HepG2 (cell line): ENCODE measurements at regions of chr1 and their contacts with region 1.

Region 1: DNA sequence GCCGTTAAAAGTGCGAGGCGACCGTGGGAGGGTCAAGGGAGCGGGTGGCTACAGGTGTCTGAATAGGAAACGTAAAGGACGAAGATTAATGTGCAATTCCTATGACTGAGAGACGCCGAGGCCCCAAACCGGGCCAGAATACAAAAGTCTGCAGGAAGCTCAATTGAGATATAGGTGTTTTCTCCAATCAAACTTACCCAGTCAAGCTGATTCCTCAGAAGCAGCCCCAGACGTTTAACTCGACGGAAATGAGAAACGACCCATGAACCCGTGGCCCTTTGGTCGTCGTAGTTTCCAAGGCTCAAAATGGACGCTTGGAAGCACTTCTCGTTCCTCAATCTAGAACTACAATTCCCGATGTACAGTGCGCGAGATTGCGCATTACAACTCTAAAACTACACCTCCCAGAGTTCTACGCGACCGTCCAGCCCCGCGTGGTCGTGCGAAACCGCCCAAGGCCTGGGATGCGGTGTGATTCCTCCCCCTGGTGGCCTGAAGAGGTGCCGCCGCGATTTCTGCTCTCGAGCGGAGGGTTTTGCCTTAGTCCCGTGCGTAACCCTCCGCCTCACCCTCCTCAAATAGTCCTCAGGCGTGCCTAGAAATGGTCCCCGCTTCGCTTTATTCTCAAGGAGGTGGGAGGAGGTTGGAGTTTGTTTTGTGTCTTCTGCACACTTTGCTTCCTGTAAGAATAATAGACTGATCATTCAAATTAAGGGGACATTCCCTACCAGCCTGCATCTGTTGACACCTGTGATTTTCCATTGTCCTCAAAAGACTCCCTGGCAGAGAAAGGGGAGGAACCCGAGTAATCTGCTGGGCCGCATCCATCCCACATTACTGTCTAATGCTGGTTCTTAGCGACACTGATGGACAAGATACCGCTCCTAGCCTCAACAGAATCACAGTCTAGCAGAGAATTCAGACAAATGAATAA is at the start of gene PAFAH2:
- DNase-seq: peak; percentile 98
- ATAC-seq: peak; percentile 96
- H3K4me3 ChIP-seq: peak within 1 kb of the TSS; percentile 81 to 85 (median 82)
- H3K27ac ChIP-seq: peak within 1 kb of the TSS; percentile 78
- H3K4me1 ChIP-seq: peaks cover 36% of the 10 kb centered on the region
- H3K27me3 ChIP-seq: no peaks in the 10 kb centered on the region; a peak in 1 of 5 replicates
- CTCF ChIP-seq: peak; percentile 100
- EP300 ChIP-seq: peak in 1 of 2 experiments; percentile 57; a peak in 2 of 4 replicates
- POLR2A ChIP-seq: no peak; a peak in 1 of 4 replicates
- RAD21 ChIP-seq: peak; percentile 98
- total RNA-seq, gene PAFAH2: 6.9 and 9.2 TPM in 2 replicates

Region 2: GRCh38 chr1:25819576-25820246 is 178.4 kb before region 1 on chr1 and contains the start of gene MTFR1L:
- CTCF ChIA-PET with region 1: no interaction called
- POLR2A ChIA-PET with region 1: interaction called, 20 read pairs
- in situ Hi-C with region 1: loop called (anchors 10 kb)
- intact Hi-C with region 1: loop called (anchors 5 kb)
- DNase-seq: peak; percentile 83
- ATAC-seq: peak; percentile 89
- H3K4me3 ChIP-seq: peak within 1 kb of the TSS; percentile 90 to 94 (median 94)
- H3K27ac ChIP-seq: peak within 1 kb of the TSS; percentile 98
- H3K4me1 ChIP-seq: peaks cover 33% of the 10 kb centered on the region
- H3K27me3 ChIP-seq: no peaks in the 10 kb centered on the region; a peak in 1 of 5 replicates
- CTCF ChIP-seq: no peak
- EP300 ChIP-seq: no peak
- POLR2A ChIP-seq: peak; percentile 79 to 92
- RAD21 ChIP-seq: peak; percentile 27; the same call in 1 of the 2 replicates
- total RNA-seq, gene MTFR1L: 38.0 and 47.5 TPM in 2 replicates

Region 3: DNA sequence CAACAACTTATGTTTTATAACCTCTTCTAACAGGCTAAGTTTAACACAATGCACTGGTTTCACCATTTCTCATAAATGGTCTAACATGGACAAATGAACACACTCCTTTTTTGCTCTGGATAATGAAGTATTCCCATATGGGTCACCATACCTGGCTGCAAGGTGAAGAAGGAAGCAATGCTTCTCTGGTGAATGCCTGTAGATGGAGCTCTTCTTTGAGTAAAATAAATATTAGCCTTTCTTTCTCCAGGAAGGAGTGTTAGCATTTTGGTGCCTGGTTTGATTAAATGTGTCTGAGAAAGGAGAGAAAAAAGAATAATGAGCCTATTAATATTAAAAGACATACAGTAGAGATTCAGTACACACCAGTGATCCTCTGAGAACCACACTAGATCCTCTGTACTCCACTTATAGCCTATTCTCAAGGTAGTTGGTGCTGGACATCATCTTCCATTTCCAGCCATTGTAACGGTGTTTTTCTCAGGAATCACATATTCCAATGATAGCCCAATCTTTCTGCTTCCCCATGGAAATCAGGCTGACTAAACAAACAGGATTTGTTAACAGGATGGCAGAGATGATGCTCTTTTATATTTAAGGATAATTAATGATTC is 160.7 kb before region 1 on chr1:
- CTCF ChIA-PET with region 1: interaction called, 10 read pairs
- POLR2A ChIA-PET with region 1: interaction called, 3 read pairs
- in situ Hi-C with region 1: no loop called
- intact Hi-C with region 1: loop called (anchors 1 kb)
- DNase-seq: peak; percentile 41
- ATAC-seq: peak; percentile 59; the same call in 1 of the 3 replicates
- H3K4me3 ChIP-seq: no peak overlapping the region
- H3K27ac ChIP-seq: no peak overlapping the region
- H3K4me1 ChIP-seq: peaks cover 7% of the 10 kb centered on the region; the same call in 1 of the 2 replicates
- H3K27me3 ChIP-seq: no peaks in the 10 kb centered on the region
- CTCF ChIP-seq: peak; percentile 64
- EP300 ChIP-seq: no peak
- POLR2A ChIP-seq: no peak
- RAD21 ChIP-seq: no peak

Region 4: DNA sequence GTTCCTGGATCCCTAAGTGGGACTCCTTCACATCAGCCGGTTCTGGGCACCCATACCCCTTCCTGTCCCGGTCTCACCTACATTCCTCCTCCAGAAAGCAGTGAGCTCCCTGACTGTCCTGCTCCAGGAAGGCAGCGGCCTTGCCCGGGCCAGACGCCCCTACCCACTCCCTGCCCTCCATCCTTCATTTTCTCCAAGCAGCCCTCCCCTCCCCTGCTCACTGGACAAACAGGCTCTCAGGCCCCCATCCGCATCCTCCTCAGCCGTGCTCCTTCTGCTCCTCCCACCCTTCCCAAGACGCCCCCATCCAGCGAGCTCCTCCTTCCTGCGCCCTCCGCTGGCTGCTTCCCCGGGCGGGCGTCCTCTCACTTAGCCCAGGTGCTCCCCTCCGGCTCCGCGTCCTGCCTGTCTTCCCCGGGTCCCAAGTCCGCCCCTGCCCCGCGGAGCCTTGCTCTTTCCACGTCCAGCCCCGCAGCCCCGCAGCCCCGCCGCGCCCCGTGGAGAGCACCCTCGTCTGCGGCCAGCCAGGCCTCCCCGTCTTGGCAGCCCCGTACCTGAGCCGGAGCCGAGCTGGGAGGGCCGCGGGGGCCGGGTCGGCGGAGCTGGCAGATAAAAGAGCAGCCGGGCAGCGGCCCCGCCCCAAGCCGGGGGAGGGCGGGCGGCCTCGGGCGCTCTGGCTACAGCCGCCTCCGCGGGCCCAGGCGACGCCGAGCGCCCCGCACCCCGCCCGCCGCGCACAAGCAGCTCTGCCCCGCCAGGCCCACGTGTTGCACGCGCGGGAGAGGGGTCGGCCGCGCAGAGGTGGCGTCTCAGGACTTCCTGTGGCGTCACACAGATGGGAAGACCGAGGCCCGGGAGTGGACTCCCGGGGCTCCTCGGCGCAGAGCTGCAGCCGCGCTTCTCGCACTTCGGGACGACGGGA is 122.9 kb before region 1 on chr1 and contains the start of gene PAQR7:
- CTCF ChIA-PET with region 1: no interaction called
- POLR2A ChIA-PET with region 1: interaction called, 15 read pairs
- in situ Hi-C with region 1: no loop called
- intact Hi-C with region 1: no loop called
- DNase-seq: peak; percentile 67
- ATAC-seq: peak; percentile 80
- H3K4me3 ChIP-seq: peak within 1 kb of the TSS; percentile 69 to 95 (median 70)
- H3K27ac ChIP-seq: peak within 1 kb of the TSS; percentile 79
- H3K4me1 ChIP-seq: peaks cover 71% of the 10 kb centered on the region
- H3K27me3 ChIP-seq: no peaks in the 10 kb centered on the region; a peak in 1 of 5 replicates
- CTCF ChIP-seq: peak; percentile 57
- EP300 ChIP-seq: 0 out of 4 replicates have a peak, but pooled peaks of 1 of the 2 experiments have one; percentile 10
- POLR2A ChIP-seq: peak in 1 of 2 experiments; percentile 60; a peak in 3 of 4 replicates
- RAD21 ChIP-seq: no peak; the same call in none of the 2 replicates
- total RNA-seq, gene PAQR7: 6.0 and 13.2 TPM in 2 replicates

Region 5: GRCh38 chr1:25895365-25895993 is 102.6 kb before region 1 on chr1:
- CTCF ChIA-PET with region 1: interaction called, 40 read pairs
- POLR2A ChIA-PET with region 1: interaction called, 25 read pairs
- in situ Hi-C with region 1: loop called (anchors 5 kb)
- intact Hi-C with region 1: loop called (anchors 1 kb)
- DNase-seq: peak; percentile 75
- ATAC-seq: peak; percentile 92
- H3K4me3 ChIP-seq: no peak overlapping the region
- H3K27ac ChIP-seq: no peak overlapping the region
- H3K4me1 ChIP-seq: peaks cover 28% of the 10 kb centered on the region
- H3K27me3 ChIP-seq: no peaks in the 10 kb centered on the region
- CTCF ChIP-seq: peak; percentile 96
- EP300 ChIP-seq: no peak
- POLR2A ChIP-seq: no peak
- RAD21 ChIP-seq: peak; percentile 98

Region 6: DNA sequence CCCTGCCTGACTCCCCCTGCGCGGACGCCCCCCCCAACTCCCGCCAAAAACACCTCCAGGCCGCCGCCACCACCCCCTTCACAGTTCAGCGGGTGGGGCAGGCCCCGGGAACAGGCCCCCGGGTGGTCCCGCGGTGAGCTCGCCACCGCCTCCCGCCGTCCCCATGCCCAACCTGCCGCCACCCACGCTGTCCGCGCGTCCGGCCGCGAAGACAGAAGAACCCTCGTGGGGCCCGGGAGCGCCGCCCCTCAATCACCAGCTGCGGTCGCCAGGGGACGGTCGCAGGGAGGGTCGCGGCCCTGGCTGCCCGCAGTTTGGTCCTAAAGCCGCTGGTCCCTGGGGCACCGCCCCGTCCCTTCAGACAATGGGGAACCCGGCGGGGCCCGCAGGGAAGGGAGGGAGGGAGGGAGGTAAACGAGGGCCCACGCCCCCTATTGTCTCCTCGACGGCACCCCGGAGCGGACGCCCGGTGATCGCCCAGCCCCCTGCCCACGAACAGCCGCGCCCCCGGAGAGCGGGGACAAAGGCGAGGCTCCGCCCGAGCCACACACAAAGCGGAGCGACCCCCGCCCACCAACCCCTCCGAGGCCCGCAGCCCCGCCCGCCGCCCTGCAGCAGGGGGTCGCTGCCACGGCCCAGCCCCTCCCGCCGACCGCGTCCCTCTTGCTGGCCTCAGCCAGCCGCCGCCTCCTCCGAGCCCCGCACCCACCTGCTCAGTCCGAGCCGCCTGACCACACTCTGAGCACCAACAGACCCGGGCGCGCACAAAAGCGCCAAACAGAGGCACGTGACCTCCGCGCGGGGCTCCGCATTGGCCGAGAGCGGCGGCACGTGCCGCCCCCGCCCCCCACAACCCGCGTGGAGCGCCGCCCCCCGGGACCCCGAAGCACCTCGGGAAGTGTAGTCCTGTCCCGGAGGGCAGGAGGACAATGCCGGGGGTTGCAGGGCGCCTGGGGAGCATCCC is 92.1 kb before region 1 on chr1 and contains the start of gene STMN1:
- CTCF ChIA-PET with region 1: interaction called, 5 read pairs
- POLR2A ChIA-PET with region 1: interaction called, 9 read pairs
- in situ Hi-C with region 1: no loop called
- intact Hi-C with region 1: loop called (anchors 1 kb)
- DNase-seq: peak; percentile 86
- ATAC-seq: peak; percentile 89
- H3K4me3 ChIP-seq: peak within 1 kb of the TSS; percentile 74 to 92 (median 84)
- H3K27ac ChIP-seq: peak within 1 kb of the TSS; percentile 70
- H3K4me1 ChIP-seq: peaks cover 52% of the 10 kb centered on the region
- H3K27me3 ChIP-seq: peaks cover 0 to 3% of the 10 kb centered on the region in 2 experiments; a peak in 2 of 5 replicates
- CTCF ChIP-seq: no peak
- EP300 ChIP-seq: no peak
- POLR2A ChIP-seq: peak; percentile 89 to 98
- RAD21 ChIP-seq: no peak
- total RNA-seq, gene STMN1: 409 and 618 TPM in 2 replicates

Region 7: DNA sequence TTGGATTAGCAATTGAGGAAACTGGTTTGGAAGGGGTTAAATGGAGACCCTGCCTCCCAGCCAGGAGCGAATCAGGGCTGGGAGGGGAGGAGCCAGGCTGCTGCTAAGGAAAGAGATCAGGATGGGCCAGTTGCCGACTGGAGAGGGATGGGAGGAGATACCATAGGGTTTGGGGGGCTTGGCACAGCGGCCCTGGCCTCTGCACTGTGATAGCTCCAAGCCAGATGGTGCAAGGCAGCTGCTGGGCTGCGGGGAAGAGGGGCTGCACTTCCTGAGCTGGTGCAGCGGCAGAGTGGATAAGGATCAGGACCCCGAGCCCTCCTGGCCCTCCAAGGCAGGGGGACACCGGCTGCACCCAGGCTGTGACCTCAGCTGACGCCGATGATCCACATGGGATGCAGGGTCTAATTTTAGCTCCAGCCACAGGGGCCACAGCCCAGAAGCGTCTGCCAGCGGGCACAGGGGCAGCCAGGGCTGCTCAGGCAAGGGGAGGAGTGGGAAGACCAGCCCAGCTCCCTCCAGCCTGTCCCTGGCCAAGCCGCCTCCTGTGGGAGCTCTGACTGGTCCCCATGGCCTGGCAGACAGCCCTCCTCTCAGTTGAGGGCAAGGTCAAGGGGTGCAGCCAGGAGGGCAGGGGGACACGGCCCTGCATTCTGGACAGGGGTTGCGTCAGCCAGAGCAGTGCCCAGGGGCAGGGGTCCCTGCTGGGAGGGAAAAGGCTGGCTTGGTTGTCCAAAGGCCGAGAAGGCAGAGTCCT is 23.7 kb after region 1 on chr1 and contains the start of gene EXTL1:
- CTCF ChIA-PET with region 1: no interaction called
- POLR2A ChIA-PET with region 1: interaction called, 10 read pairs
- in situ Hi-C with region 1: no loop called
- intact Hi-C with region 1: no loop called
- DNase-seq: no peak
- ATAC-seq: peak; percentile 63
- H3K4me3 ChIP-seq: peak within 1 kb of the TSS; percentile 43 to 78 (median 49)
- H3K27ac ChIP-seq: no peak within 1 kb of the TSS
- H3K4me1 ChIP-seq: peaks cover 89% of the 10 kb centered on the region
- H3K27me3 ChIP-seq: peaks cover 4 to 25% of the 10 kb centered on the region in 2 experiments
- CTCF ChIP-seq: no peak
- EP300 ChIP-seq: no peak
- POLR2A ChIP-seq: peak in 1 of 2 experiments; percentile 75; a peak in 2 of 4 replicates
- RAD21 ChIP-seq: no peak
- total RNA-seq, gene EXTL1: 0.28 and 0.35 TPM in 2 replicates

Region 8: DNA sequence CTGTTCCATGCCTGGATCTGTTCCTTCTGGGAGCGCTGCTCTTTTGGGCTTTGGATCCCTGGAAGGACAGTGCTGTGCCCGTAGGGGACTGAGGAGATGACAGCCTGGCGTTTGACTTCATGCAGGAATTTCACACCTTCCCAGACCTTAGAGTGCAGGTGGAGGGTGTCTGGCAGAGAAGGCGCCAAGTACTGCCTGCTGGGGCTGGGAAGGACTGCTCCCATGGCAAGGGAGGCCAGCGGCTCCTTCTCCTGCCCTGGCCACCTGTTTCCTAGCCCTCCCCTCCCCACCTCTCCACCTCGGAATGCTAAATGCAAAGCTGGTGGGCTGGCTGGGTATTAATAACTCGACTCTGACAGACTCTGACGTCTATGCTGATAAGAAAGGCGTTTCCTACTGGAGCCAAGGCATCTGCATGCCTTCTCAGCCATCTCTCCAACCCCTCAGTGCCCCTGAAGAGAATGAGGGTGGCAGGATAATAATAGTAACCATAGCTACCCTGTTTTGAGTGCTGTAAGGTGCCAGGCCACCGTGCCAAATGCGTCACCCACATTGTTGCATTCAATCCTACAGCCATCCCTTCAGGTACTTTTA is 96.1 kb after region 1 on chr1:
- CTCF ChIA-PET with region 1: no interaction called
- POLR2A ChIA-PET with region 1: no interaction called
- in situ Hi-C with region 1: no loop called
- intact Hi-C with region 1: no loop called
- DNase-seq: no peak
- ATAC-seq: no peak
- H3K4me3 ChIP-seq: no peak overlapping the region
- H3K27ac ChIP-seq: no peak overlapping the region
- H3K4me1 ChIP-seq: 0 out of 2 replicates have a peak, but pooled peaks cover 4% of the 10 kb centered on the region
- H3K27me3 ChIP-seq: peaks cover 2 to 33% of the 10 kb centered on the region in 2 experiments; a peak in 3 of 5 replicates
- CTCF ChIP-seq: no peak
- EP300 ChIP-seq: no peak
- POLR2A ChIP-seq: no peak
- RAD21 ChIP-seq: no peak